HepG2 (cell line): ENCODE measurements at regions of chr10 and their contacts with region 1.

Region 1: GRCh38 chr10:29496341-29497162 is 138.2 kb downstream of the SVIL start:
- DNase-seq: peak; percentile 49
- ATAC-seq: peak; percentile 98
- H3K4me3 ChIP-seq: no peak overlapping the region
- H3K27ac ChIP-seq: no peak overlapping the region
- H3K4me1 ChIP-seq: no peaks in the 10 kb centered on the region
- H3K27me3 ChIP-seq: no peaks in the 10 kb centered on the region
- CTCF ChIP-seq: peak; percentile 95
- EP300 ChIP-seq: no peak
- POLR2A ChIP-seq: no peak
- RAD21 ChIP-seq: peak; percentile 88

Region 2: GRCh38 chr10:29455095-29455494 is 41.5 kb before region 1 on chr10:
- CTCF ChIA-PET with region 1: no interaction called
- POLR2A ChIA-PET with region 1: no interaction called
- in situ Hi-C with region 1: no loop called
- intact Hi-C with region 1: loop called (anchors 5 kb)
- DNase-seq: peak; percentile 75
- ATAC-seq: peak; percentile 96
- H3K4me3 ChIP-seq: no peak overlapping the region
- H3K27ac ChIP-seq: peak overlapping the region; percentile 59
- H3K4me1 ChIP-seq: peaks cover 23% of the 10 kb centered on the region
- H3K27me3 ChIP-seq: no peaks in the 10 kb centered on the region
- CTCF ChIP-seq: no peak
- EP300 ChIP-seq: peak in 1 of 2 experiments; percentile 50; a peak in 1 of 4 replicates
- POLR2A ChIP-seq: no peak
- RAD21 ChIP-seq: no peak

Region 3: DNA sequence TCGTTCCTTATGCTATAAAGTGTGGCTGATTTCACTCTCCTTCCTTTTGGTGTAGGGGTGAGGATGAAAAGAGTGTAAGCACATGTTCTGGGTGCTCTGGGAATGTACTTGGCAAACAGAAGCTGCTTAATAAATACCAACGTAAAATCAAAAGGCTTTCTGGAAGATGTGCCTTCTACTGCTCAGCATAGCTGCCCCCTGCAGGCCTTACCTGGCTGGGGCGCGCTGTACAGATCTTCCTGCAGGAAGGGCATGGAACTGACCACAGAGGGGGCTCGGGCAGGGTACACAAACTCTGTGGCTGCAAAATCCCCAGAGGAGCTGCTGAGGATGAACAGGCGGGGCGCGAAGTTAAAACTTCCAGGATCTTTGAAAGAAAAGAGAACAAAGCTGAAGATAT is 31.2 kb before region 1 on chr10:
- CTCF ChIA-PET with region 1: no interaction called
- POLR2A ChIA-PET with region 1: no interaction called
- in situ Hi-C with region 1: no loop called
- intact Hi-C with region 1: no loop called
- DNase-seq: peak; percentile 14
- ATAC-seq: peak; percentile 89
- H3K4me3 ChIP-seq: no peak overlapping the region
- H3K27ac ChIP-seq: no peak overlapping the region
- H3K4me1 ChIP-seq: 0 out of 2 replicates have a peak, but pooled peaks cover 6% of the 10 kb centered on the region
- H3K27me3 ChIP-seq: no peaks in the 10 kb centered on the region
- CTCF ChIP-seq: peak; percentile 54
- EP300 ChIP-seq: no peak
- POLR2A ChIP-seq: no peak
- RAD21 ChIP-seq: 0 out of 2 replicates have a peak, but pooled peaks have one; percentile 17

Region 4: DNA sequence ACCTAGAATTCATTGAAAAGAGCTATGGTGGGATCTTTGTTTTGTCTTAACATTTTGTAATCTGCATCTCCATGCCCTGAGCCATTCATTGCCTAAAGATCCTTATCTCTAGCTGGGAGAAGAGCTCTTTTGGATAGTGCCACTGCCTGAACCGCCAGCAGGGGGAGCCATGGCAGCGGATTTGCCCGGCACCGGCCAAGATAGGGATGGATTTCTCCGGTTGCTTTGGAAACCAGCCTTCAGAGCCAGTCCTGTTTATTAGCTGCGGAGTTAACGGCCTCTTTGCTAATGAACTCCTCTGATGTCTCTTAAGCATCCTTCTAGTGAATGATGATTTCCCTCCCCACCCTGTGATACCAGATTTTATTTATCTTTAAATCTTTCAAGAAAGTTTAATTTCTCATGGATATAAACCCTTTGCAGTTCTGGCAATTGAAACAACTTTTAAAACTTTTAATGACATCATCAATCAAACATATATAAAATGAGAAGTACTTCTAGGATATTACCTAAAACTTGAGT is 1191.2 kb after region 1 on chr10:
- CTCF ChIA-PET with region 1: no interaction called
- POLR2A ChIA-PET with region 1: no interaction called
- in situ Hi-C with region 1: loop called (anchors 5 kb)
- intact Hi-C with region 1: no loop called
- DNase-seq: peak; percentile 40
- ATAC-seq: peak; percentile 90
- H3K4me3 ChIP-seq: no peak overlapping the region
- H3K27ac ChIP-seq: no peak overlapping the region
- H3K4me1 ChIP-seq: no peaks in the 10 kb centered on the region
- H3K27me3 ChIP-seq: peaks cover 0 to 34% of the 10 kb centered on the region in 2 experiments; a peak in 1 of 5 replicates
- CTCF ChIP-seq: peak; percentile 77
- EP300 ChIP-seq: no peak
- POLR2A ChIP-seq: no peak
- RAD21 ChIP-seq: peak; percentile 36